ENCODE measurements at regions of chr17 and their contacts with region 1.

Region 1: GRCh38 chr17:47907932-47908562 is 12.0 kb downstream of the SP2 start:
- DNase-seq: peak; percentile 11
- H3K4me3 ChIP-seq: peak overlapping the region; percentile 4 to 12 (median 6)
- H3K27ac ChIP-seq: no peak overlapping the region
- H3K4me1 ChIP-seq: peaks cover 22% of the 10 kb centered on the region
- H3K27me3 ChIP-seq: no peaks in the 10 kb centered on the region
- CTCF ChIP-seq: no peak

Region 2: DNA sequence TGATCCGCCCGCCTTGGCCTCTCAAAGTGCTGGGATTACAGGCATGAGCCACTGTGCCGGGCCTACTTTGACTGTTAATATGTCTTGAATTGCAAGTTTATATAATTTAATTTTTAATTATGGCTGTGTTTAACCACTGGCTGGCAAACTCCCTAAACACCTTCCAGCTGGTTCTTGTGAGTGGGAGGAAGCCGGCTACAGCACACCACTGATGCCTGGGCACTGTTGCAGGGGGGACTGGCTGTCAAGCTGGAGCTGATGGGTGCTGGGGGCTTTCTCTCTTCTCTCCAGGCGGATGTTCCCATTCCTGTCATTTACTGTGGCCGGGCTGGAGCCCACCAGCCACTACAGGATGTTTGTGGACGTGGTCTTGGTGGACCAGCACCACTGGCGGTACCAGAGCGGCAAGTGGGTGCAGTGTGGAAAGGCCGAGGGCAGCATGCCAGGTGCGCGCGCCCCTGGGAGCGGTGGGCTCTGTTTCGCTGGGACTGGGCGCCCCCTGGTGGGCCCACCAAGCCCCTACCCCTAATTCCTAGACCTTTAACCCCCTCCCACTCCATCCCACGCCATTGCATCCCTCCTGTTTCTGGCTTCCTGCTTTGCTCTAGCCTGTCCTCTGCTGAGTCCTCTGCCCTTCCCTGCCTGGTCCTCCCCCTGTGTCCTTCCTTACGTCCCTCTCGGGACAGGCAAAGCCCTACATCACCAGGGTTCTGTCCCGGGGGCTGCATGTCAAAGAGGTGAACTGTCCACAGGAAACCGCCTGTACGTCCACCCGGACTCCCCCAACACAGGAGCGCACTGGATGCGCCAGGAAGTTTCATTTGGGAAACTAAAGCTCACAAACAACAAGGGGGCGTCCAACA is 165.5 kb before region 1 on chr17:
- CTCF ChIA-PET with region 1: no interaction called
- dilution Hi-C with region 1: no loop called
- in situ Hi-C with region 1: no loop called
- intact Hi-C with region 1: no loop called
- DNase-seq: no peak
- H3K4me3 ChIP-seq: no peak overlapping the region
- H3K27ac ChIP-seq: no peak overlapping the region
- H3K4me1 ChIP-seq: no peaks in the 10 kb centered on the region
- H3K27me3 ChIP-seq: peaks cover 15% of the 10 kb centered on the region
- CTCF ChIP-seq: peak in 1 of 2 donors; percentile 22

Region 3: DNA sequence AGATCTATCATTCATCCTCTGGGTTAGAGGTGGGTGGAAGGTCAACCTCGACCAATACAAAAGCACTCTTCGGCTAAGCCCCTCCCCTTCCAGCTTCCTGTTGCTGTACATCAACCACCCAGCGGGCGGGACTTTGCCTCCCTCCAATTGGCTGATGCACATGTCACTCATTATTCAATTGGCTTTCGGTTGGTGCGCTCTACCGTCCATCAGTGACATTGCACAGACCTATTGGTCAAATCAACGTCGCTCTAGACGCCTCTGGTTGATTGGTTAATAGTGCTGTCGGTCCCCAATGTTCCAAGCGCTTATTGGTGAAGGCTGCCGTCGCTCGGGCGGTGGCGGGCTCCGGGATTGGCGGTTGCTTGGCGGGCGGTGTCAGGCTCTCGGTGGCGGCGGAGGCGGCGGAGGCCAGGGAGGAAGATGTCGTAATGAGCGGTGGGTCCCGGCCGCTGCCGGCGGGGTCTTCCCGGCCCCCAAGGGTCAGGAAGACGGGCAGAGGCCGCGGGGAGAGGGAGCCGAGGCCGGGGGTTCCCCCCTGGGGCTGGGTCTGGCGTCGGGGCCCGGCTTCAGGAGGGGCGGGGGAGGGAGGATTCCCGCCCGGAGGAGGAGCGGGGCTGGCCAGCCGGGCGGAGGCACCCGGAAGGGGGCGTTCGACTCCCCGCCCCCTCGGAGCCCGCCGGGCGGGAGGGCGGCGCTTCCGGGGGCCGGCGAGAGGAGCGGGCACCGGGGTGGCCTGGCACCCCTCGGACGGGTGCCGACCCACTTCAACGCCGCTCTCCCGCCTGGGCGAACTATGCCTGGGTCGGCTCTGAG is 12.0 kb before region 1 on chr17 and contains the start of gene SP2:
- CTCF ChIA-PET with region 1: interaction called, 10 read pairs
- dilution Hi-C with region 1: no loop called
- in situ Hi-C with region 1: no loop called
- intact Hi-C with region 1: no loop called
- DNase-seq: peak; percentile 100
- H3K4me3 ChIP-seq: peak within 1 kb of the TSS; percentile 86 to 97 (median 91)
- H3K27ac ChIP-seq: peak within 1 kb of the TSS; percentile 85
- H3K4me1 ChIP-seq: peaks cover 29% of the 10 kb centered on the region
- H3K27me3 ChIP-seq: no peaks in the 10 kb centered on the region
- CTCF ChIP-seq: no peak
- total RNA-seq, gene SP2: 1.5 to 14.9 TPM

Region 4: GRCh38 chr17:49515196-49515770 is 1607.2 kb after region 1 on chr17:
- CTCF ChIA-PET with region 1: no interaction called
- dilution Hi-C with region 1: no loop called
- in situ Hi-C with region 1: no loop called
- intact Hi-C with region 1: no loop called
- DNase-seq: peak; percentile 75
- H3K4me3 ChIP-seq: no peak overlapping the region
- H3K27ac ChIP-seq: peak overlapping the region; percentile 34
- H3K4me1 ChIP-seq: peaks cover 23% of the 10 kb centered on the region
- H3K27me3 ChIP-seq: no peaks in the 10 kb centered on the region
- CTCF ChIP-seq: peak in 1 of 2 donors; percentile 25

Measured in mammary epithelial cell (primary cell).